Activated CD8-positive, alpha-beta memory T cell treated with anti-CD3 and anti-CD28 coated beads, Interleukin-2, amount 10 ng/mL, durations not matched to agents 7 days and 5 days (primary cell): ENCODE measurements at regions of chr20 and their contacts with region 1.

Region 1: GRCh38 chr20:2206957-2207769 is 88.6 kb upstream of the TGM3 start:
- DNase-seq: peak; percentile 72
- ATAC-seq: peak; percentile 87
- H3K4me3 Mint-ChIP-seq: peak overlapping the region; percentile 57
- H3K27ac Mint-ChIP-seq: no peak overlapping the region
- H3K4me1 Mint-ChIP-seq: peaks cover 4% of the 10 kb centered on the region
- H3K27me3 Mint-ChIP-seq: peaks cover 62% of the 10 kb centered on the region

Region 2: DNA sequence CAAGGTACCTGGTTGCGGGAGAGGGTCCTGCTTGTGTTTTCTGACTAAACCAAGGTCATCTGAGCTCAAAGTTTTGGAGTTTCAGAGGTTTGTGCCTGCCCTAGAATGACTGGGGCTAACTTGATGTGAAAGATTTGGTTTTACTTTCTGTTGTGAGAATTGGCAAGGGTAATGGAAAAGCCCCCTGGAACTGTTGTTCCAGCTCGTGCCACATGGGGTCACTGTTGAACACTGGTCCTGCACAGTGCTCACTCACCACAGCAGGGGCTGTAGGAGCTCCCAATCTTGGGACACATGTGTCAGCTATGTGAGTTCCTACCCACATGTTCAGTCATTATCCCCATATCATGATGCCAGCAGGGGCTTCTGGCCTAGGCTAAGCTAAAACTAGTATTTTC is 180.0 kb after region 1 on chr20:
- CTCF ChIA-PET with region 1: interaction called, 13 read pairs
- DNase-seq: peak; percentile 76
- ATAC-seq: peak; percentile 83
- H3K4me3 Mint-ChIP-seq: peak overlapping the region; percentile 32
- H3K27ac Mint-ChIP-seq: peak overlapping the region; percentile 52
- H3K4me1 Mint-ChIP-seq: peaks cover 8% of the 10 kb centered on the region
- H3K27me3 Mint-ChIP-seq: peaks cover 3% of the 10 kb centered on the region